HAP-1 (cell line): ENCODE measurements at regions of chr6 and their contacts with region 1.

Region 1: DNA sequence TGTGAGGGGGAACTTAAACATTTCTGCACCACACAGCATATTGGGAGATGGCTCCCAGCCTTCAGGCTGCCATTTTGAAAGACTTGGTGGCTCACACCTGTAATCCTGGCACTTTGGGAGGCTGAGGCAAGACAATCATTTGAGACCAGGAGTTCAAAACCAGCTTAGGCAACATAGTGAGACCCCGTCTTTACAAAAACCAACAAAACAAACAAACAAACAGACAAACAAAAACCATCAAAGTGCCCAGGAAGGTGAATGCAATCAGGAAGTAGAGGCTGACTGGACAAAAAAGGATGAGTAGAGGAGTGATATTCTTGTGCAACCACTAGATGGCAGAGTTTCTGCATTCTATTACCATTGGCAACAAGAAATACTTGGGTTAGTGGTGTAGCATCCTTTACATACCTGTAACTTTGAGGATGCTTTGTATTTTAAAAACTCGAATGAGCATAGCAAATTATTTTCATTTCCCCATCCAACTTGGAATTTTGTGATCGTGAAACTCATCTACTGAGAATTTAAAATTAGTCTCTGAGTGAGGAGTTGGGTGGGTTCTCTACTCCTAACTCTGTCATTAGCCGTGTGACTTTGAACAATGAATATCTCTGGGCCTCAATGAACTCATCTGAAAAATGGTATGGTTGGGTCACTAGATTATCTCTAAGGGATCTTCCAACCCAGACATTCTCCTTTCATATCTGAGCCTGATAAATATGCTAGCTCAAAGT is 84.4 kb downstream of the CRYBG1 start:
- DNase-seq: peak; percentile 50 to 70
- H3K4me3 ChIP-seq: no peak overlapping the region
- H3K4me1 ChIP-seq: no peaks in the 10 kb centered on the region
- H3K27me3 ChIP-seq: peaks cover 44% of the 10 kb centered on the region

Region 2: DNA sequence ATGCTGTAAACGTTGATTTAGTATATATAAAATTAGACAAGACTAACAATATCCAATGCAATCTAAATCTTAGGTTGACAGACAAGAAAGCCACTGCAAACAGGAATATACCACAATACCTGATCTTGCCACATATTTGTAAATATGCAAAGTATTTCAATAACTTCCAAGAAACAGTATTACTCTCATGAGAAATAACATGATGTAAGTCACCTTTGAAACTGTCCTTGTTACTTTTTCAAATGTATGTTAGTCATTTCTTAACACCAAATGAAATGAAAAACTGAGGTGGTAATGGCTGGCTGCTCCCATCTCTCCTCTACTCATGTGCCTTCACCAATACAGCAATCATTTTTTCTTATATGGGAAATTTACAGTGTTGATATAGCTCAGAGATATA is 238.0 kb before region 1 on chr6:
- in situ Hi-C with region 1: no loop called
- DNase-seq: no peak
- H3K4me3 ChIP-seq: no peak overlapping the region
- H3K4me1 ChIP-seq: peaks cover 10% of the 10 kb centered on the region
- H3K27me3 ChIP-seq: no peaks in the 10 kb centered on the region

Region 3: DNA sequence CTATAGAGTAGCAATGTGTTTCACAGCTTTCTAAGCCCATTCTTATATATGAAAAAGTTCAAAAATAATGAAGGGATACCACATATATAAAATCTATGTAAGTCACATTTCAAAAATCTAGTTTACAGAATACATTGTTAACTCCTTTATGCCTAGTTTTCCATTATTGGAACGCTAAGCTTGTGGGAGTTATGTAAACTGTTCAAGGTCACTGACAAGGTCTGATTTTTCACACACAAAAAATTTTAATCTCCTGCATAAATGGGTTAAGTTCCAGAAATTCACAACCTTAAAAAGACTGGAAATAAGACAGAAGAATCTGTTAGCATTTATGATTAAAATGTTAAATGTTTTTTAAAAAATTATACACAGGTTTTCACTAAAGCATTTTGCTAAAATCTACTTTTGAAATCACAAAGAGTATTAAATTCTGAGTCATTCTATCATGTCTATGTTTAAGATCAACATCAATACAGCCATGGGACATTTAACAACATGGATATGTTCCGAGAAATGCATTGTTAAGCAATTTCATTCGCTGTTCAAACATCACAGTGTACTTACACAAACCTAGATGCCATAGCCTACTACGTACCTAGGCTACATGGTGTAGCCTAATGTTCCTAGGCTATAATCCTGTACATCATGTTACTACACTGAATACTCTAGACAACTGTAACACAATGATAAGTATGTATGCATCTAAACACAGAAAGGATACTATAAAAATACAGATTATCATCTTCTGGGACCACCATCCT is 144.7 kb before region 1 on chr6:
- in situ Hi-C with region 1: no loop called
- DNase-seq: no peak
- H3K4me3 ChIP-seq: no peak overlapping the region
- H3K4me1 ChIP-seq: peaks cover 17% of the 10 kb centered on the region
- H3K27me3 ChIP-seq: no peaks in the 10 kb centered on the region

Region 4: DNA sequence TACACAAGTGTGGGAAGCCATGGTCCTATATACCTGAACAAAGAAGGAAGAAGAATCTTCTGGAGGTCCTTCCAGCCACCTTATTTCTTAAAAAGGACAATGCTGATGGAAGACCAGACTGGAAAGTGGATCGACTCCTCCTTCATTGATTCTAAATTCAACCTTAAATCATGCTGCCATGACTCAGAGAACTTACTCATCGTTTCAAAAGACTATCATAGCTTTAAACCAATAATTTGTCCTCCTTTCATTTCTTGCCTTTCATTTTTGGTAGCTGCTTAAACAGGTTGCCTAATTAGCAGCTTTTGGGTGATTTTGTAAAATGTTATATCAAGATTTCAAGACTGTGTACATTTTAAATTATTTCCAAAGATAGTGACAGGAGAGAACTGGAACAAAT is 123.6 kb after region 1 on chr6:
- in situ Hi-C with region 1: loop called (anchors 5 kb)
- DNase-seq: no peak
- H3K4me3 ChIP-seq: no peak overlapping the region
- H3K4me1 ChIP-seq: no peaks in the 10 kb centered on the region
- H3K27me3 ChIP-seq: no peaks in the 10 kb centered on the region